Right ventricle myocardium superior (tissue), 1 donor: ENCODE measurements at regions of chr9 and their contacts with region 1.

Region 1: GRCh38 chr9:19102631-19103345 is at the start of gene HAUS6:
- DNase-seq: peak; percentile 98
- ATAC-seq: peak; percentile 100
- total RNA-seq, gene HAUS6: 5.9 TPM

Region 2: DNA sequence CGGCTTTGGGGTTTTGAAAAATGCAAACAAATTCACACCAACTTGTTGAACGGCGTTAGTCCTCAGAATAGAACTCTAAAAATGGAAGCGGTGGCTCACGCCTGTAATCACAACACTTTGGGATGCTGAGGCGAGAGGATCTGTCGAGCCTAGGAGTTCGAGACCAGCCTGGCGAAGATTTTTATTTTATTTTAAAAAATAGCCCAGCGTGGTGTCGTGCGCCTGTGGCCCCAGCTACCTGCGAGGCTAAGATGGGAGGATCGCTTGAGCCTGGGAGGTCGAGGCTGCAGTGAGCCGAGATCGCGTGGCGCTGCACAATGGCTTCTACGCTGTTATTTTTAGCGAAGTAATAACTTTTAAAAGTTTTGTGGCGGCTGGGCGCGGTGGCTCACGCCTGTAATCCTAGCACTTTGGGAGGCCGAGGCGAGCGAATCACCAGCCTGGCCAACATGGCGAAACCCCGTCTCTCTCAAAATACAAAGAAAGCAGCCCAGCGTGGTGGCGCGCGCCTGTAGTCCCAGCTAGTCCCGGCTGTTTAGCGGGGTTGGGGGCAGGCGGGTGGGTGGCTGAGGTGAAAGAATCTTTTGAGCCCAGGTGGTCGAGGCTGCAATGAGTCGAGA is 25.2 kb after region 1 on chr9:
- intact Hi-C with region 1: loop called (anchors 2 kb)
- DNase-seq: peak; percentile 73
- ATAC-seq: peak; percentile 35